ENCODE measurements at regions of chr10 and their contacts with region 1.

Region 1: DNA sequence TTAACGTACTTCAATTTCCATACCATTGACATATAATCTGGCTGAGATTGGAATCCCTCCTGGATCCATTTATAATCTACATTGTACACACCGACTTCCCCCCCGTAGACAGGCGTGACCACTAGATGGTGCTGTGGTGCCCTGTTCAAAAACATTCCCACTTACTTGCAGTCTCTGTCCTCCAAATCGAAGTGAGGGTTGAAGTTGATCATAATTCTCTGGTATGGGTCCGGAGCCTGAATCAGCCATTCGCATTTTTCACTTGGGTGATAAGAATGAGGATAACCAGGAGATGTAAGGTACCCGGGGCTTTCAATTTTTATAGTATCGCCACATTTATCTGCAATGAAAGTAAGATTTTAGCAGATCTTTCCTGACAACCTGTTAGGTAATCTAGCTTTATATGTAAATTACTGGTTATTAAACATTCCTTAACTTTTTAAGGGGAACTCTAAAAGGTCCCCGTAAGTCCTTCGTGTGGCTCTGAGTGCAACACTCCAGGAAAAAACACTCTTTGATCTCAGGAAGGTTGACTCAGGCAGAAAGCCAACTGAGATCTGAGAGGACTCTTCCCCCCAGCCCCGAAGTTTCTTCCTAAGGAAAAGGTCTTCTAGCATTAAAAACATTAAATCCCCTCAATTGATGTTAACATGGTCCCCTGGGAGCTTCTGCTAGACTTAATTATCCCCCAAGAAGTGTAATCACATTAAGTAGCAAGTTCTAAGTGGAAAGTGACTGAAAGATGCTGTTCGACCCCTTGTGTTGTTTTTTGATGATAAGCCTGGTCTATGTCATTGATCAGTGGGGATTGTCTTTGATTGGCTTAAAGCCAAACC is 3.7 kb downstream of the NRP1 start:
- DNase-seq: peak; percentile 75 to 90
- ATAC-seq: peak; percentile 51

Region 2: GRCh38 chr10:33193057-33193700 is 137.6 kb before region 1 on chr10:
- intact Hi-C with region 1: loop called in 1 of 2 experiments (anchors 10 kb)
- DNase-seq: peak; percentile 77 to 81
- ATAC-seq: peak; percentile 81

Region 3: DNA sequence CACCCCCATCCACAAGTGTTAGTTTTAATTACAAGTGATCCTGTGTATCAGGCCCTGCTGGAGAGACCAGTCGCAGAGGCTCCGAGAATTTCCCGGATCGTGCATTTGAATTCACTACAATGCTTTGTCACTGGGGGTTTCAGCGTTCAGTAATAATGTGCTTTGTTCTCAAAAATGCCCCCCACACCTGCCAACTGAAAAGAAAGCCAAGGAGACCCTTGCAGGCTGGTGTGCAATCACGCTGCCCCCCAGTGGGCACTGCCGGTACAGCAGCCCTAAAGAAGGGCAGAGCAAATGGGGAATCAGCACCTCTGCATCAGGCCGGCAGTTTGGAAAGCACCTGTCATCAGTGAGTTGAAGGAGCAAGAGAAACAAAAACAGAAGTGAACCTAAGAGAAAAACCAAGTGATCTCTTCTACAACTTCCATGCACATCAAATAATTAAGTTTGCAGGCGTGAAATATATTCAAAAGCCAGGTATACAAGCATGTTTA is 1306.7 kb after region 1 on chr10:
- intact Hi-C with region 1: loop called in 1 of 2 experiments (anchors 5 kb)
- DNase-seq: peak in 1 of 2 donors; percentile 75
- ATAC-seq: peak; percentile 51

Measured in left colon (tissue), 2 donors.